Activated CD8-positive, alpha-beta T cell treated with anti-CD3 and anti-CD28 coated beads, Interleukin-2, amount 10 ng/mL, durations not matched to agents 7 days and 5 days (primary cell): ENCODE measurements at regions of chr9 and their contacts with region 1.

Region 1: GRCh38 chr9:114696814-114697544 is 15.0 kb upstream of the TEX48 start:
- DNase-seq: peak; percentile 89
- ATAC-seq: peak; percentile 76
- H3K4me3 Mint-ChIP-seq: peak overlapping the region; percentile 52
- H3K27ac Mint-ChIP-seq: peak overlapping the region; percentile 98
- H3K4me1 Mint-ChIP-seq: peaks cover 94% of the 10 kb centered on the region
- H3K27me3 Mint-ChIP-seq: no peaks in the 10 kb centered on the region

Region 2: GRCh38 chr9:114484854-114485443 is 212.0 kb before region 1 on chr9:
- CTCF ChIA-PET with region 1: no interaction called
- POLR2A ChIA-PET with region 1: no interaction called
- DNase-seq: peak; percentile 62
- ATAC-seq: peak; percentile 78
- H3K4me3 Mint-ChIP-seq: no peak overlapping the region
- H3K27ac Mint-ChIP-seq: peak overlapping the region; percentile 74
- H3K4me1 Mint-ChIP-seq: peaks cover 47% of the 10 kb centered on the region
- H3K27me3 Mint-ChIP-seq: no peaks in the 10 kb centered on the region

Region 3: GRCh38 chr9:114718801-114719221 is 21.8 kb after region 1 on chr9:
- CTCF ChIA-PET with region 1: interaction called, 38 read pairs
- POLR2A ChIA-PET with region 1: interaction called, 55 read pairs
- DNase-seq: peak; percentile 98
- ATAC-seq: peak; percentile 95
- H3K4me3 Mint-ChIP-seq: peak overlapping the region; percentile 19
- H3K27ac Mint-ChIP-seq: peak overlapping the region; percentile 94
- H3K4me1 Mint-ChIP-seq: peaks cover 88% of the 10 kb centered on the region
- H3K27me3 Mint-ChIP-seq: no peaks in the 10 kb centered on the region

Region 4: GRCh38 chr9:114894801-114895433 is 197.9 kb after region 1 on chr9:
- CTCF ChIA-PET with region 1: interaction called, 12 read pairs
- POLR2A ChIA-PET with region 1: interaction called, 13 read pairs
- DNase-seq: peak; percentile 59
- ATAC-seq: peak; percentile 22
- H3K4me3 Mint-ChIP-seq: no peak overlapping the region
- H3K27ac Mint-ChIP-seq: peak overlapping the region; percentile 79
- H3K4me1 Mint-ChIP-seq: peaks cover 52% of the 10 kb centered on the region
- H3K27me3 Mint-ChIP-seq: no peaks in the 10 kb centered on the region